Posterior vena cava (tissue), 2 donors: ENCODE measurements at regions of chr12 and their contacts with region 1.

Region 1: DNA sequence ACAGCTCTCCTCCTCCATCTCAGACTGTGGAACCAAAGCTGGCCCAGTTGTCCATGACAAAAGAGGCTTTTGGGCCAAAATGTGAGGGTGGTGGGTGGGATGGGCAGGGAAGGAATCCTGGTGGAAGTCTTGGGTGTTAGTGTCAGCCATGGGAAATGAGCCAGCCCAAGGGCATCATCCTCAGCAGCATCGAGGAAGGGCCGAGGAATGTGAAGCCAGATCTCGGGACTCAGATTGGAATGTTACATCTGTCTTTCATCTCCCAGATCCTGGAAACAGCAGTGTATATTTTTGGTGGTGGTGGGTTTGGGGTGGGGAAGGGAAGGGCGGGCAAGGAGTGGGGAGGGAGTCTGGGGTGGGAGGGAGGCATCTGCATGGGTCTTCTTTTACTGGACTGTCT is 11.8 kb upstream of the TAMALIN start:
- DNase-seq: no peak

Region 2: GRCh38 chr12:50013381-50014147 is 1981.4 kb before region 1 on chr12:
- intact Hi-C with region 1: loop called in 1 of 2 experiments (anchors 5 kb)
- DNase-seq: no peak

Region 3: DNA sequence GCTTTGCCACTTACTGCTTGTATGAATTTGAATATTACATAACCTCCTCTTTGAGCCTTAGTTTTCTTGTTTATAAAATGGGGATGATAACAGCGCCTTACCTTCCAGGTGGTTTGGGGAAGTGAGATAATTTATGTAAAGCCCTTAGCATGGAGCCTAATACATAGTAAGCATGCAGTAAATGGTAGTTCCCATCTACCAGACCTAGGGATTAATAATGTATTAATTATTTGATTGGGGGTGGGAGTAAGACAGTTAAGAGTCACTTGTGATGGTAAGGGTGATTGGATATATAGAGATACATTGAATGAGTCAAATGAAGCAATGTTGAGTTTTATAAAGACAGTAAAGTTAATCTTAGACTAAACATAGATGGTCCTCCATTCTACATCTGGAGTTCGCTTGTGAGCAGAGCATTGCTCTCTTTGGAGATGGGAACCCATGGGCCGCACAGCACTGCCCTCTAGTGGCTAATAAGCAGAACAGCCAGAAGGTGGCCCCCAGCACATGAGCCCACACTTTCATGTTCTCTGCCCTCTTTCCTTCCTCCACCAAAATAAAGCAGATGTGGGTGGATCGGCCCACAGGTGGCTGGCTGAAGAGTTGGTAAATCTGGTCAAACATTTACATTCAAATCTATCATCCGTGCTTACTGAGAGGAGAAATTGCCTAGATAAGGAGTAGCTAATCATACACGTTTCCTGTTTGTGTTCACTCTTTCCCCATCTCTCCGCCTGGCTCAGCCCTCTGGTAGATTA is 14.7 kb before region 1 on chr12:
- intact Hi-C with region 1: no loop called
- DNase-seq: peak; percentile 88